SK-N-SH (cell line): ENCODE measurements at regions of chr1 and their contacts with region 1.

Region 1: DNA sequence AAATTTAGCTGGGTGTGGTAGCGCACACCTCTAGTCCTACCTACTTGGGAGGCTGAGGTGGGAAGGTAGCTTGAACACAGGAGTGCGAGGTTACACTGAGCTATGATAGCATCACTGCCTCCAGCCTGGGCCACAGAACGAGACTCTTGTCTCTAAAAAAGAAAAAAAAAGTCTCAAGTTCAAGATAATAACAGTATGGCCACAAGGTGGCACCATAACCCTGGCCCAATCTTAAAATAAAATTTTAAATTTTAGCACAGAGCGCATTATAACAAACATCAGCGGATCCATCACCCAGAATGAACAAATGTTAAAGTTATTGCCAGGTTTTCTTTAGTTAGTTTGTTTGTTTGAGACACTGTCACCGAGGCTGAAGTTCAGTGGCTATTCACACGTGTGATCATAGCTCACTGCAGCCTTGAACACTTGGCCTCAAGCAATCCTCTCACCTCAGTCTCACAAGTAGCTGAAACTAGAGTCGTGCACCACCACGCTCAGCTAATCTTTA is 2.9 kb upstream of the HTR6 start:
- DNase-seq: no peak
- H3K4me3 ChIP-seq: no peak overlapping the region
- H3K27ac ChIP-seq: no peak overlapping the region
- H3K4me1 ChIP-seq: peaks cover 0 to 6% of the 10 kb centered on the region in 2 experiments; a peak in 1 of 4 replicates
- H3K27me3 ChIP-seq: no peaks in the 10 kb centered on the region; the same call in 1 of the 2 replicates
- CTCF ChIP-seq: peak; percentile 83
- EP300 ChIP-seq: no peak
- RAD21 ChIP-seq: peak; percentile 75

Region 2: GRCh38 chr1:19330449-19331135 is 331.2 kb before region 1 on chr1:
- CTCF ChIA-PET with region 1: interaction called, 10 read pairs
- POLR2A ChIA-PET with region 1: no interaction called
- DNase-seq: peak; percentile 76
- H3K4me3 ChIP-seq: no peak overlapping the region
- H3K27ac ChIP-seq: no peak overlapping the region
- H3K4me1 ChIP-seq: peaks cover 0 to 4% of the 10 kb centered on the region in 2 experiments; a peak in 1 of 4 replicates
- H3K27me3 ChIP-seq: no peaks in the 10 kb centered on the region
- CTCF ChIP-seq: no peak
- EP300 ChIP-seq: no peak
- RAD21 ChIP-seq: no peak

Region 3: DNA sequence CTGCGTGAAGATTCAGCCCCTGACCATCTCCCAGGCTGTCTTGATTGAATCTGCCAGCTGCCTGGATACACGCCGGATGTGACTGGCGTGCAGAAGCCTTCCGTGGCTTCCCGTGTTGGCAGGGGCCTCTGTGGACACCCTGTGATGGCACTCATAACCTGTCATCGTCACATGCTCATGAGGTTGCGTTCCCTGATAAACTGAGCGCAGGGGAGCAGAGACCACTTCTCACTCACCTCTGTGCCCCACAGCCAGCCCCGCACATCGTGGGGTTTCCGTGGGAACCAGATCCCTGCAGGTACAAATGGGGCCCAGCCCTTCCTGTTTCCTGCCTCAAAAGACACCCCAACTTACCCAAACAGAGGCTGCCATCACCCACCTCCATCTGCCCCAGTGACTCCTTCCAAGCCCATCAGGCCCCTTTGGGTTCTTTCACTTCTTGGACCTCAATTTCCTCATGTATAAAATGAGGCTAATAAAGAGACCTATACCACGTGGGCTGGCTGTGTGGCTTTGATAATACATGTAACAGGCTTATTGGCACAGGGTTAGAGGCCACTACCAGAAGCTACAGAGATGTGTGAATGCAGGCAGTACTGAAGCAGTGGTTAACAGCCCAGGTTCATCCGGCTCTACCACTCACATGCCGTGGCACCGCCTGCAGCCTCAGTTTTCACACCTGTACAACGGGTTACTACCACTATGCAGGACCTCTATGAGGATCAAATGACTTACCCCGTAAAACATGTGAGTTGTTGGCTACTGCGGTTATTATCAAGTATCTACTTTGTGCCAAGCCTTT is 26.5 kb after region 1 on chr1:
- CTCF ChIA-PET with region 1: interaction called, 18 read pairs
- POLR2A ChIA-PET with region 1: no interaction called
- DNase-seq: no peak
- H3K4me3 ChIP-seq: no peak overlapping the region
- H3K27ac ChIP-seq: no peak overlapping the region; a peak in 1 of 4 replicates
- H3K4me1 ChIP-seq: peaks cover 0 to 12% of the 10 kb centered on the region in 2 experiments; a peak in 1 of 4 replicates
- H3K27me3 ChIP-seq: no peaks in the 10 kb centered on the region
- CTCF ChIP-seq: no peak
- EP300 ChIP-seq: no peak
- RAD21 ChIP-seq: no peak

Region 4: DNA sequence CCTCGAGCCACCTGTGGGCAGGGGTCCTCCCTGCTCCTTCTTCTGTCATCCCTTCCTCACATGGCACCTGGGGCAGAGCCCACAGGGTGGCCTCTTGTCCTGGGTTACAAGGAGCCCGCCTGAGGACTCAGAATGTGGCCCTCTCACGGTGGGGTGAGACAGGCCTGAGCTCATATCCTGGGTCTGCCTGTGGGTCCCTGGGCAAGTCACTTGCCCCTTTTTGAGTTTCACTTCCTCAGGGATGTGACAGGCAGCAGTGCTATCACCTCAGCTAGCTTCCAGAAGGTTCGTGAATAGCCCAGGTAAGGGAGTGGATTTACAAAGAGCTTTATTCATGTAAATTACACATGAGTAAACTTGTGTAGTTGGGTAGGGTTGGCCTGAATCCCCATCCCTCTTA is 36.4 kb after region 1 on chr1:
- CTCF ChIA-PET with region 1: interaction called, 553 read pairs
- POLR2A ChIA-PET with region 1: no interaction called
- DNase-seq: no peak
- H3K4me3 ChIP-seq: no peak overlapping the region
- H3K27ac ChIP-seq: no peak overlapping the region
- H3K4me1 ChIP-seq: no peaks in the 10 kb centered on the region
- H3K27me3 ChIP-seq: no peaks in the 10 kb centered on the region
- CTCF ChIP-seq: no peak
- EP300 ChIP-seq: no peak
- RAD21 ChIP-seq: no peak

Region 5: DNA sequence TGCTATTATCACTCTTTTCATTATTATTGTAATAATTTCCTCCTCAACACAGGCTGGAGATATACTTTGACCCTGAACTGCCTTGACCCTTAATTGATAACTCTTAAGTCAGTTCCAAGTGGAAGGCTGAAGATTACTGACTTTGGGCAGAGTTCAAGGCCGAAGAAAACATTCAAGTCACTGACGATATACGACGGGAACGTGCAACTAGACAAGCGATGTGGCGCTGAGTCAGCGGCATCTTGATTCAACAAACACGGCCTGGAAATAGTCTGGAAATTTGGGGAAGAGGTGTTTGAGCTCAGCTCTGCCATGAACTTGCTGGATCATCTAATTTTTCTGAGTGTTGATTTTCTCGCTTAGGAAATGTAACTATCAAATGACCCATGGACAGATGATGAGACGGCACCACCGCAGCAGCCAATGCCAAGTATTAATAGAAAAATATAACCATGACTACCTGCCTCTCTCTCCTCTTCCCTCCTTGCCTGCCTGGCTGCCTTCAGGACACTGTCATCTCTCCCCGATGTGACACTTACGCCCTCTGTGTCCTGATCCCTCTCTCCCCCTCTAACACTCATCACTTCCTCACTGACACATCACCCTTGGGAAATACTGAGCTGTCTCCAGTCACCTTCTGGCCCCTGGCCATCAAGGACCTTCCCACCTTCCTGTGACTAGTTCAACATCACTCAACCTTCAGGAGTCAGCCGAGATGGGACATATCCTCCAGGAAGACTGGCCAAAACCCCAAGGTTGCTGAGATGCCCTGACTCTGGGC is 88.5 kb after region 1 on chr1:
- CTCF ChIA-PET with region 1: no interaction called
- POLR2A ChIA-PET with region 1: no interaction called
- DNase-seq: no peak
- H3K4me3 ChIP-seq: no peak overlapping the region
- H3K27ac ChIP-seq: no peak overlapping the region; a peak in 1 of 4 replicates
- H3K4me1 ChIP-seq: peaks cover 0 to 2% of the 10 kb centered on the region in 2 experiments; a peak in 1 of 4 replicates
- H3K27me3 ChIP-seq: no peaks in the 10 kb centered on the region
- CTCF ChIP-seq: no peak
- EP300 ChIP-seq: no peak
- RAD21 ChIP-seq: no peak